ENCODE measurements at regions of chr7 and their contacts with region 1.

Region 1: DNA sequence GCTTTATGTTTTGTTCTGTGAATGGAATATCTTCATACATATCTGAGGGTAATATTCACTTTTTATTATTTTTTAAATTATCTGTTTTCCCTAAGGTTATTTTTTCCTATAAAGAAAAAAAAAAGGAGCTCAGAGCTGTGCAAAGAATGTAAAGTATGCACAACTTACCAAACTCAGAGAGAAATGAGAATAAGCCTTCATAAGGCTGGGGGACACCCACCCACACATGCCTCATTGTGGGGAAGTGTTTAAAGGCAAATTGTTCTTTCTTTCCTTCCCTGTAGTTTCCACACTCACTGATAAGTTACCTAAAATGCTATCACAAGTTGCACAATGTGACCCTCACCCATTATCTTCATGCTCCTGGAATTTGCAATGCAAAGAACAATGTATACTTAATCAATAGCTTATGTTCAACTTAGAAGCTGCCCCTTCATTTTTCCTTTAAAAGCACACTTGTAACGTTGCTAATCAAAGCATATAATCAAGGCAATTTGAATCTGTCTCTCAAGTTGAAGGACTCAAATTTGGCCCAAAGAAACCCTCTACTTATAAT is 108.1 kb downstream of the GNAT3 start:
- DNase-seq: no peak
- ATAC-seq: no peak
- H3K4me3 ChIP-seq: no peak overlapping the region
- H3K27ac ChIP-seq: no peak overlapping the region
- H3K4me1 ChIP-seq: no peaks in the 10 kb centered on the region
- CTCF ChIP-seq: no peak
- EP300 ChIP-seq: no peak
- POLR2A ChIP-seq: no peak
- RAD21 ChIP-seq: no peak

Region 2: GRCh38 chr7:80379034-80379982 is 24.5 kb before region 1 on chr7:
- CTCF ChIA-PET with region 1: no interaction called
- POLR2A ChIA-PET with region 1: no interaction called
- DNase-seq: no peak
- ATAC-seq: no peak
- H3K4me3 ChIP-seq: no peak overlapping the region
- H3K27ac ChIP-seq: no peak overlapping the region
- H3K4me1 ChIP-seq: peaks cover 9% of the 10 kb centered on the region; the same call in 1 of the 3 replicates
- CTCF ChIP-seq: no peak
- EP300 ChIP-seq: no peak
- POLR2A ChIP-seq: no peak
- RAD21 ChIP-seq: no peak

Region 3: GRCh38 chr7:80392229-80393169 is 11.3 kb before region 1 on chr7:
- CTCF ChIA-PET with region 1: interaction called, 17 read pairs
- POLR2A ChIA-PET with region 1: no interaction called
- DNase-seq: peak; percentile 3 to 36
- ATAC-seq: peak in 1 of 2 experiments; percentile 61; a peak in 3 of 6 replicates
- H3K4me3 ChIP-seq: no peak overlapping the region
- H3K27ac ChIP-seq: no peak overlapping the region
- H3K4me1 ChIP-seq: no peaks in the 10 kb centered on the region
- CTCF ChIP-seq: peak; percentile 70
- EP300 ChIP-seq: no peak
- POLR2A ChIP-seq: no peak
- RAD21 ChIP-seq: peak; percentile 70 to 77

Region 4: DNA sequence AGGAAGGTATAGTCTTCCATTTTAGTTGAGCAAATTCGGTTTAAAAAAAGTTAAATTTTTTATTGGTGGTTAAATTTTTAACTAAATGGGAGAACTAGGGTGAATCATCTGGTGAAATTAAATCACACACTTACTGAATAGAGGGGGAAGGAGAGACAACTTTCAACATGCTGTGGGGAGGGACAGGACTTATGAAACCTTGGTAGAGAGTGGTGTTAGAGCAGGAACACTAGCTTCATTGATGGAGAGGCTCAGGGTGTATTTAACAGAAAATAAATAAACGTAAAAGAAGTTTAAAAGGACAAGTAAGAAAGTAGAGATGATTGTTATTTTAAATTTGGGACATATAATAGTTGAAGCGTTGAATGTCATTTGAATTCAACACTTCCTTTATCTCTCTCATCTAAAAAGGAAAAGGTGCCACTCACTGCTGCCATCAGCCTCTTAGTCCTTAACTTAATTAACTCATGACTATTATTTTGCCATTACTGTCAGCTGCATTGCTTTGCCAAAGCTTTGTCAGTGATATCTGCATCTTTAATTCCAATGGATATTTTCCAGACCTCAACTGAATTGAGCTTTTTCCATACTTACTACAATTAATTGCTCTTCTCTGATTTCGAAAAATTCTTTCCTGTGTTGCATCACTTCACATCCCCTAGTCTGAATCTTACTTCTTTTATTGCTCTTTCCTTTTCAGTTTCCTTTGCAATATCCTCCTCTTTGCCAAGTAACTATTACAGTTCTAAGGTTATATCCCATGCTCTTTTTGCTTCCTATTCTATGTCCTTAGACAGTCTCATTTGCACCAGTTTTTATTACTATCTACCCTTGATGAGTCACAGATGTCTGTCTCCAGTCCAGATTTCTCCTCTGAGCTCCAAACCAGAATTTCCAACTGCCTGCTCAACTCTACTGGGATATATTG is 36.4 kb after region 1 on chr7:
- CTCF ChIA-PET with region 1: no interaction called
- POLR2A ChIA-PET with region 1: no interaction called
- DNase-seq: no peak
- ATAC-seq: no peak; a peak in 2 of 6 replicates
- H3K4me3 ChIP-seq: no peak overlapping the region
- H3K27ac ChIP-seq: peak overlapping the region in 1 of 2 experiments; percentile 33; a peak in 3 of 6 replicates
- H3K4me1 ChIP-seq: peaks cover 16% of the 10 kb centered on the region
- CTCF ChIP-seq: no peak
- EP300 ChIP-seq: no peak
- POLR2A ChIP-seq: no peak
- RAD21 ChIP-seq: no peak